PC-9 (cell line): ENCODE measurements at regions of chr20 and their contacts with region 1.

Region 1: GRCh38 chr20:50790651-50791277 is 4.1 kb upstream of the BCAS4 start:
- DNase-seq: peak; percentile 86 to 97
- H3K4me3 ChIP-seq: peak overlapping the region; percentile 30; the same call in 1 of the 2 replicates
- H3K27ac ChIP-seq: peak overlapping the region; percentile 61
- H3K4me1 ChIP-seq: peaks cover 18% of the 10 kb centered on the region
- H3K27me3 ChIP-seq: no peaks in the 10 kb centered on the region
- CTCF ChIP-seq: peak; percentile 73

Region 2: GRCh38 chr20:50189681-50190582 is 600.8 kb before region 1 on chr20:
- CTCF ChIA-PET with region 1: interaction called, 4 read pairs
- POLR2A ChIA-PET with region 1: no interaction called
- intact Hi-C with region 1: loop called (anchors 1 kb)
- DNase-seq: peak; percentile 70 to 95
- H3K4me3 ChIP-seq: peak overlapping the region; percentile 88; the same call in 1 of the 2 replicates
- H3K27ac ChIP-seq: peak overlapping the region; percentile 99
- H3K4me1 ChIP-seq: peaks cover 44% of the 10 kb centered on the region
- H3K27me3 ChIP-seq: no peaks in the 10 kb centered on the region
- CTCF ChIP-seq: peak; percentile 86

Region 3: DNA sequence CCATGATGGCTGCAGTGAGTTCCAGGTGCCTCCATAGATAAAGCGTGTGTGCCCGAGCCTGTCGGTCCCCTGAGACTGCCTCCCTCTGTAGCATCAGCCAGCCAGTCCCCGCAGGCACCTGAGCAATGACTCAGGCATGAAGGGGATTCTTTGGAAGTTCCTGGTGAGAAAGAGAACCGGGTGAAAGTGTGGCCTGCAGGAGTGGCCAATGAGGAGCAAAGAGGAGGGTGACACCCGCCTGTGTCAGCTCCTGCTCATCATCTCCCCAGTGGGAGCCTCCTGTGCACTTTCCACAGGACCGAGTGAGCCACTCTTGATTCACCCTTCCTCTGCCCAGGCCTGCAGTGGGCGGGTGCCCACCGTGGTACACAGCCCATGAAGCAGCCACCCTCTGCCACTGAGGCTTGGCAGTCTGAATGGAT is 351.8 kb before region 1 on chr20:
- CTCF ChIA-PET with region 1: no interaction called
- POLR2A ChIA-PET with region 1: no interaction called
- intact Hi-C with region 1: no loop called
- DNase-seq: peak; percentile 90 to 98
- H3K4me3 ChIP-seq: no peak overlapping the region
- H3K27ac ChIP-seq: peak overlapping the region; percentile 93
- H3K4me1 ChIP-seq: peaks cover 56% of the 10 kb centered on the region
- H3K27me3 ChIP-seq: no peaks in the 10 kb centered on the region
- CTCF ChIP-seq: no peak

Region 4: GRCh38 chr20:50588034-50588611 is 202.6 kb before region 1 on chr20:
- CTCF ChIA-PET with region 1: interaction called, 3 read pairs
- POLR2A ChIA-PET with region 1: no interaction called
- intact Hi-C with region 1: loop called (anchors 2 kb)
- DNase-seq: peak; percentile 53 to 78
- H3K4me3 ChIP-seq: no peak overlapping the region
- H3K27ac ChIP-seq: no peak overlapping the region
- H3K4me1 ChIP-seq: no peaks in the 10 kb centered on the region
- H3K27me3 ChIP-seq: no peaks in the 10 kb centered on the region
- CTCF ChIP-seq: peak; percentile 98

Region 5: GRCh38 chr20:50680412-50680908 is 110.3 kb before region 1 on chr20:
- CTCF ChIA-PET with region 1: interaction called, 3 read pairs
- POLR2A ChIA-PET with region 1: no interaction called
- intact Hi-C with region 1: loop called (anchors 5 kb)
- DNase-seq: peak; percentile 69 to 86
- H3K4me3 ChIP-seq: peak overlapping the region; percentile 30; the same call in 1 of the 2 replicates
- H3K27ac ChIP-seq: peak overlapping the region; percentile 80
- H3K4me1 ChIP-seq: peaks cover 57% of the 10 kb centered on the region
- H3K27me3 ChIP-seq: no peaks in the 10 kb centered on the region
- CTCF ChIP-seq: no peak

Region 6: GRCh38 chr20:50762435-50763201 is 28.1 kb before region 1 on chr20:
- CTCF ChIA-PET with region 1: interaction called, 8 read pairs
- POLR2A ChIA-PET with region 1: no interaction called
- intact Hi-C with region 1: loop called (anchors 2 kb)
- DNase-seq: peak; percentile 50 to 72
- H3K4me3 ChIP-seq: peak overlapping the region; percentile 22; the same call in 1 of the 2 replicates
- H3K27ac ChIP-seq: peak overlapping the region; percentile 96
- H3K4me1 ChIP-seq: peaks cover 64% of the 10 kb centered on the region
- H3K27me3 ChIP-seq: no peaks in the 10 kb centered on the region
- CTCF ChIP-seq: no peak

Region 7: DNA sequence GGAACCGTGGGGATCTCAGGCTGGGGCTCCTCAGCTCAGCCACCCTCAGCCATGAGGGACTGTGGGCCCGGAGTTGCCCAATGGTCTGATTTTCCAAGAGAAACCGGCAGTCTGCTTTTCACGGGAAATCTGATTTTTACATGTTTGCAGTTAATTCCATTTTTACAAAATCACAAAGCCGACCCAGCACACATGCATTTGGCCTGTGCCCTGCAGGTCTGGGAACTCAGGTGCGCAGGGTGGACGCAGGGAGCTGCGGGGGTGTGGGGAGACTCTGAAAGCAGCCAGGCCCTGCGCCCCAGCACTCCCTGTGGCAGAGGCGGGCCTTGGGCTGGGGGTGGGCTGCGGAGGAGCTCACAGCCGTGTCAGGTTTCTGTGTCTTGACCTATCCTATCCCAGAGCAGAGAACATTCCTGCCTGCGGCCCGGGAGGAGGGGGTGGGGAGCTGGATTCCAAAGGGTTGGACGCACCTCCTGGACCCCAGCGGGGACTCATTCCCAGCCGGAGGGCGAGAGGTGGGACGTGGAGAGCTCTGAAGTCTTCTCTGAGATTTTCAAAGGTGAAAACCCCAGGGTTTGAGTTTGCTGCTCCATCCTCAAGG is 79.9 kb after region 1 on chr20:
- CTCF ChIA-PET with region 1: no interaction called
- POLR2A ChIA-PET with region 1: no interaction called
- intact Hi-C with region 1: no loop called
- DNase-seq: no peak
- H3K4me3 ChIP-seq: no peak overlapping the region
- H3K27ac ChIP-seq: no peak overlapping the region
- H3K4me1 ChIP-seq: no peaks in the 10 kb centered on the region
- H3K27me3 ChIP-seq: no peaks in the 10 kb centered on the region
- CTCF ChIP-seq: no peak

Region 8: GRCh38 chr20:50958615-50959542 is 168.1 kb after region 1 on chr20 and contains the start of gene MOCS3:
- CTCF ChIA-PET with region 1: interaction called, 8 read pairs
- POLR2A ChIA-PET with region 1: interaction called, 19 read pairs
- intact Hi-C with region 1: no loop called
- DNase-seq: peak; percentile 82 to 92
- H3K4me3 ChIP-seq: peak within 1 kb of the TSS; percentile 93
- H3K27ac ChIP-seq: peak within 1 kb of the TSS; percentile 83
- H3K4me1 ChIP-seq: peaks cover 38% of the 10 kb centered on the region
- H3K27me3 ChIP-seq: no peaks in the 10 kb centered on the region
- CTCF ChIP-seq: no peak
- total RNA-seq, gene MOCS3: 4.8 and 5.5 TPM in 2 replicates

Region 9: DNA sequence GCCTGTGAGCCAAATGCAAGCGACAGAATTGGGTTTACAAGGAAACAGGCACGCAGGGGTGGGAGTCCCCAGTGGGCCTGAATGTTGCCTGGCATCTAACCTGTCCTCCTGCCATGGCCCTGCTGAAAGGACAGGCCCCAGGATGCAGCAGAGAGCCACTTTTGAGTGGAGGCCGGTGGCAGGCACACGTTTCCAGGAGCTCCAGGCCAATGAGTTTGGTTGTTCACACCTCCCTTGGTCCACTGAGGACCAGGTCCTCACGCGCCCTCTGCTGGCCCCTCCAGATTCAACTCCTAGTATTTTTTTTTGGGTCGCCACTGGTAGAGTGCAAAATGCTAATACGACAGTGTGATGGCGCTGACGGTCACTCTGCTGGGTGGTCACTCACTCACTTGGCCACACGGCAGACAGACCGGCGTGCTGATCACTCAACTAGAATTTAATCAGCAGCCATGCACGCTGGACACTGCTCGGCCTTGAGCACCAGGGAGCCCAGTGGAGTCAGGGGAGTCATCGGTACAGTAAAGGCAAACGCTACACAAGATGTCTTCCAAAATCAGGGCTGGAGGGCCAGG is 833.5 kb after region 1 on chr20:
- CTCF ChIA-PET with region 1: no interaction called
- POLR2A ChIA-PET with region 1: no interaction called
- intact Hi-C with region 1: loop called (anchors 10 kb)
- DNase-seq: peak; percentile 53 to 76
- H3K4me3 ChIP-seq: no peak overlapping the region
- H3K27ac ChIP-seq: no peak overlapping the region
- H3K4me1 ChIP-seq: no peaks in the 10 kb centered on the region
- H3K27me3 ChIP-seq: no peaks in the 10 kb centered on the region
- CTCF ChIP-seq: peak; percentile 87